ENCODE measurements at regions of chr2 and their contacts with region 1.

Region 1: GRCh38 chr2:203014456-203015199 is at the start of gene NBEAL1:
- DNase-seq: peak; percentile 99
- ATAC-seq: peak; percentile 93
- H3K4me3 ChIP-seq: peak within 1 kb of the TSS; percentile 61 to 99 (median 87)
- H3K4me3 Mint-ChIP-seq: peak within 1 kb of the TSS; percentile 93
- H3K27ac ChIP-seq: peak within 1 kb of the TSS; percentile 87 to 93
- H3K27ac Mint-ChIP-seq: peak within 1 kb of the TSS; percentile 89
- H3K4me1 ChIP-seq: peaks cover 15 to 17% of the 10 kb centered on the region in 2 donors
- H3K4me1 Mint-ChIP-seq: peaks cover 35% of the 10 kb centered on the region
- H3K27me3 ChIP-seq: no peaks in the 10 kb centered on the region
- H3K27me3 Mint-ChIP-seq: no peaks in the 10 kb centered on the region
- CTCF ChIP-seq: no peak
- total RNA-seq, gene NBEAL1: 22.0 and 22.5 TPM in 2 replicates

Region 2: GRCh38 chr2:201642579-201643215 is 1371.9 kb before region 1 on chr2:
- CTCF ChIA-PET with region 1: no interaction called
- POLR2A ChIA-PET with region 1: no interaction called
- intact Hi-C with region 1: loop called (anchors 5 kb)
- DNase-seq: peak; percentile 92
- ATAC-seq: peak; percentile 86
- H3K4me3 ChIP-seq: peak overlapping the region; percentile 73 to 100 (median 95)
- H3K4me3 Mint-ChIP-seq: peak overlapping the region; percentile 96
- H3K27ac ChIP-seq: peak overlapping the region; percentile 89 to 93
- H3K27ac Mint-ChIP-seq: peak overlapping the region; percentile 97
- H3K4me1 ChIP-seq: peaks cover 10 to 14% of the 10 kb centered on the region in 2 donors
- H3K4me1 Mint-ChIP-seq: peaks cover 12% of the 10 kb centered on the region
- H3K27me3 ChIP-seq: peaks cover 0 to 2% (median 0%) of the 10 kb centered on the region in 4 experiments
- H3K27me3 Mint-ChIP-seq: peaks cover 7% of the 10 kb centered on the region
- CTCF ChIP-seq: no peak

Region 3: DNA sequence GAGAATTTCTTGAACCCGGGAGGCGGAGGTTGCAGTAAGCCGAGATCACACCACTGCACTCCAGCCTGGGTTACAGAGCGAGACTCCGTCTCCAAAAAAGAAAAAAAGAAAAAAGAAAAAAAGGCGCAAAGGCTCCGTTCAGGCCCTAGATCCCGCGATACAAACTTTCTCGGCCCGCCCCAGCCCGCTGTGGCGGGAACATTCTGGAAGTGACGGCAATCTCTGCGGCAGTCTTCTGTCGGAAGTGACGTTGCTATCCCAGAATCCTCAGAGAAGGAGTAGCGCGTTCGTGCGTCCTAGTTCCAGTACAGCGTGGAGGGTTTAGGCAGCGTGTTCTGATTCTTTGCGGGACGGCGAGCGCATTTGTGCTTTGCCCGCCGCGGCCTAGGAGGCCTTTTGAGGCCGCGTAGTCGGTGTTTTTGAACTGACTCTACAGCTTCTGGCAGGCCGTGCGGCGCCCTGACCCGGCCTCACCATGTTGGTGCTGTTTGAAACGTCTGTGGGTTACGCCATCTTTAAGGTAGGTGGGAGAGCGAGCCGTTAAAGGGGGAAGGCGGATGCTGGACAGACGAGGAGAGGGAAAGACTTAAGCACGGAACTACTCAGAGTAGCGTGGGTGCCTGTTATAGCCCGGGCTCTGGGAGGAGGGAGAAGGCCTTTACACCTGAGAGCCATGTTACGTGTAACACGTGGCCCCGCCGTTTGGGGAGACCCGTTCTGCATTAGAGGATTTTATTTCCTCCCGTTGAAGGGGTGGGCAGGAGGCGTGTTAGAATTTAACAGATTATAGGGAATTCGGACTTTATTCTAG is 749.0 kb before region 1 on chr2 and contains the start of gene NOP58:
- CTCF ChIA-PET with region 1: no interaction called
- POLR2A ChIA-PET with region 1: no interaction called
- intact Hi-C with region 1: loop called (anchors 10 kb)
- DNase-seq: peak; percentile 95
- ATAC-seq: peak; percentile 86
- H3K4me3 ChIP-seq: peak within 1 kb of the TSS; percentile 70 to 100 (median 97)
- H3K4me3 Mint-ChIP-seq: peak within 1 kb of the TSS; percentile 57
- H3K27ac ChIP-seq: peak within 1 kb of the TSS; percentile 81 to 93
- H3K27ac Mint-ChIP-seq: peak within 1 kb of the TSS; percentile 71
- H3K4me1 ChIP-seq: peaks cover 25 to 42% of the 10 kb centered on the region in 2 donors
- H3K4me1 Mint-ChIP-seq: peaks cover 19% of the 10 kb centered on the region
- H3K27me3 ChIP-seq: no peaks in the 10 kb centered on the region
- H3K27me3 Mint-ChIP-seq: no peaks in the 10 kb centered on the region
- CTCF ChIP-seq: no peak
- total RNA-seq, gene NOP58: 136 and 138 TPM in 2 replicates

Region 4: GRCh38 chr2:202911512-202912341 is 102.9 kb before region 1 on chr2 and contains the starts of genes CARF and WDR12:
- CTCF ChIA-PET with region 1: no interaction called
- POLR2A ChIA-PET with region 1: no interaction called
- intact Hi-C with region 1: loop called (anchors 1 kb)
- DNase-seq: peak; percentile 96
- ATAC-seq: peak; percentile 81
- H3K4me3 ChIP-seq: peak within 1 kb of the TSS; percentile 52 to 100 (median 97)
- H3K4me3 Mint-ChIP-seq: peak within 1 kb of the TSS; percentile 99
- H3K27ac ChIP-seq: peak within 1 kb of the TSS; percentile 67 to 83
- H3K27ac Mint-ChIP-seq: peak within 1 kb of the TSS; percentile 99
- H3K4me1 ChIP-seq: peaks cover 5 to 11% of the 10 kb centered on the region in 2 donors
- H3K4me1 Mint-ChIP-seq: peaks cover 24% of the 10 kb centered on the region
- H3K27me3 ChIP-seq: no peaks in the 10 kb centered on the region
- H3K27me3 Mint-ChIP-seq: no peaks in the 10 kb centered on the region
- CTCF ChIP-seq: no peak
- total RNA-seq, gene CARF: 27.5 and 28.4 TPM in 2 replicates
- total RNA-seq, gene WDR12: 17.4 and 20.8 TPM in 2 replicates

Region 5: DNA sequence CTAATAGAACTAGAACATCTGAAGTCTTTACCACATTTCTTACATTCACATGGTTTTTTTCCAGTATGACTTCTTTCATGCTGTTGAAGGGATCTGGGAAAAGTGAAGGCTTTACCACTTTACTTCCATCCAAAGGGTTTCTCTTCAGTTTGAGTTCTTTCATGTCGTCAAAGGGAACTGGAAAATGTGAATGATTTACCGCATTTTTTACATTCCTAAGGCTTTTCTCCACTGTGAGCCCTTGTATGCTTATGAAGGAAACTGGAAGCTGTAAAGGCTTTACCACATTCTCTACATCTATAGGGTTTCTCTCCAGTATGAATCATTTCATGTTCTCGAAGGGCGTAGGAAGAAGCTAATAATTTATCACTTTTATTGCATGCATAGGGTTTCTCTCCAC is 46.7 kb after region 1 on chr2:
- CTCF ChIA-PET with region 1: no interaction called
- POLR2A ChIA-PET with region 1: no interaction called
- intact Hi-C with region 1: no loop called
- DNase-seq: no peak
- ATAC-seq: no peak
- H3K4me3 ChIP-seq: no peak overlapping the region
- H3K4me3 Mint-ChIP-seq: no peak overlapping the region
- H3K27ac ChIP-seq: no peak overlapping the region
- H3K27ac Mint-ChIP-seq: no peak overlapping the region
- H3K4me1 ChIP-seq: no peaks in the 10 kb centered on the region
- H3K4me1 Mint-ChIP-seq: no peaks in the 10 kb centered on the region
- H3K27me3 ChIP-seq: no peaks in the 10 kb centered on the region
- H3K27me3 Mint-ChIP-seq: no peaks in the 10 kb centered on the region
- CTCF ChIP-seq: no peak

Region 6: DNA sequence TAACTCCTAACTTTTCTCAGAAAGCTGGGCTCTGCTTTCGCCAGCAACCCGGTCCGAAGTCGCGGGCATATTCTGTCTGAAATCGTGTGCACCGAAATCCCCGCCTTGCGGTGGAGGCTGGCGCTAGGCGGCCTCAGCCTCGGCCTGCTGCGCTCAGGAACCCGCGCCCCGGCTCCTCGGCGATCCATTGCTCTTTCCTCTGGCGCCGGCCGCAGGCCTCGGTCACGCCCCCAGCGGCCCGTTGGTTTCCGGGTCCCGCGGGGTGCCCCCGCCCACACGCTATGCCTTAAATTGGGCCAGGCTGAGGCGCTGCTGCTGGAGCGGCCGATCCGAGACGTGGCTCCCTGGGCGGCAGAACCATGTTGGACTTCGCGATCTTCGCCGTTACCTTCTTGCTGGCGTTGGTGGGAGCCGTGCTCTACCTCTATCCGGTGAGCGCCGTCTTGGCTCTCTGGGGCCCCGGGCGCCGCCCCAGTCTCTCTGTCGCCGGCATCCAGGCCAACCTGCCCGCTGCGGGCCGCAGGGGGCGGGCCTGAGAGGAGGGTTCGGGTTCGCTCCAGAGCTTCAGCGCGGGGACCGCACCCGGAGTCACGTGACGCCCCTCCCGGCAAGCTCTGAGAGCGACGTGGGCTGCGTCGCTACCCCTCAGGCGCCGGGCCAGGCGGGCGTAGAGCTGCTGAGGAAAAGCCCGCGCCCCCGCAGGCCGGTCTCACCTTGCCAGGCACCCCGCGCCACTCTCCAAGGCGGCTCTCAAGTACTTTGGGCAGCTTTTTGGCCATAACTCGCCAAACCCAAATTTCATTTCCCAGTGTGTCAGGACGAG is 224.3 kb after region 1 on chr2 and contains the start of gene CYP20A1:
- CTCF ChIA-PET with region 1: no interaction called
- POLR2A ChIA-PET with region 1: no interaction called
- intact Hi-C with region 1: loop called (anchors 1 kb)
- DNase-seq: peak; percentile 98
- ATAC-seq: peak; percentile 86
- H3K4me3 ChIP-seq: peak within 1 kb of the TSS; percentile 63 to 98 (median 95)
- H3K4me3 Mint-ChIP-seq: peak within 1 kb of the TSS; percentile 96
- H3K27ac ChIP-seq: peak within 1 kb of the TSS; percentile 88 to 94
- H3K27ac Mint-ChIP-seq: peak within 1 kb of the TSS; percentile 98
- H3K4me1 ChIP-seq: peaks cover 17 to 19% of the 10 kb centered on the region in 2 donors
- H3K4me1 Mint-ChIP-seq: peaks cover 31% of the 10 kb centered on the region
- H3K27me3 ChIP-seq: no peaks in the 10 kb centered on the region
- H3K27me3 Mint-ChIP-seq: no peaks in the 10 kb centered on the region
- CTCF ChIP-seq: no peak
- total RNA-seq, gene CYP20A1: 38.5 and 40.8 TPM in 2 replicates

Region 7: DNA sequence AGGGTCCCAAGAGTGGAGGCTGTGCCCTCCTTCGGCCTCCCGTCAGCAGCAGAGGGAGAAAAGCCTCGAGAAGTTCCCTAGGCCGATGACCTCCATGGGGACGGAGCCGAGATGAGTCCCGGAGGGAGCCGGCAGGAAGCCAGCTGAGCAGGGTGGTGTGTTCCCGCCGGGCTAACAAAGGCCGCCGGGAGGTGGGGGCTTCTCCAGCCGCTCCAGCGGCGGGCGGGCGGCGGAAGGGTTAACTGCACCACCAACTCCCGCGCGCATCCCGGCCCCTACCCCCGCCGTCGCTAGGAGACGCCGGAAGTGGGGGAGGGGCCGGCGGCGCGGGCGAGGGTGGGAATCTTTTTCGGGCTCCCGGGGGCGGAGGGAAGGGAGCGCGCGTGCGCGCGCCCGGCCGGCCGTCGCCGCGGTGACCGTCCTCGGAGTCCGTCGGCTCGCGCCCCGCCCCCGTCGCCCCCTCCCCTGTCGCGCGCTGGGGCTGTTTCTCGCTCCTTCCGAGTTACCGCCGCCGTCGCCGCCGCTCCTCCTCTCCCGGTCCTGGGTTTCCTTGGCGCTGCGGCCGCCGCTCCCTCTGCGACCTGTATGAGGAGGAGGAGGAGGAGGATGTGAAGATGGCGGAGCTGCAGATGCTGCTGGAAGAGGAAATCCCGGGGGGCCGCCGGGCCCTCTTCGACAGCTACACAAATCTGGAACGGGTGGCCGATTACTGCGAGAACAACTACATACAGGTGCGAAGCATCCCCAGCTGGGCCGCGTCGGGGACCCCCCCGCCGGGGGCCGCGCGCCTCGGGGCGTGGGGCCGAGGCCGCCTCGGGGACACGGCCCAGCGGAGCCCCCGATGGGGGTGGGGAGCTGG is 313.5 kb after region 1 on chr2 and contains the start of gene ABI2:
- CTCF ChIA-PET with region 1: no interaction called
- POLR2A ChIA-PET with region 1: no interaction called
- intact Hi-C with region 1: loop called (anchors 10 kb)
- DNase-seq: peak; percentile 63
- ATAC-seq: peak; percentile 69
- H3K4me3 ChIP-seq: peak within 1 kb of the TSS; percentile 70 to 84 (median 78)
- H3K4me3 Mint-ChIP-seq: peak within 1 kb of the TSS; percentile 91
- H3K27ac ChIP-seq: peak within 1 kb of the TSS in 1 of 2 donors; percentile 63
- H3K27ac Mint-ChIP-seq: peak within 1 kb of the TSS; percentile 90
- H3K4me1 ChIP-seq: peaks cover 8 to 14% of the 10 kb centered on the region in 2 donors
- H3K4me1 Mint-ChIP-seq: peaks cover 23% of the 10 kb centered on the region
- H3K27me3 ChIP-seq: no peaks in the 10 kb centered on the region
- H3K27me3 Mint-ChIP-seq: no peaks in the 10 kb centered on the region
- CTCF ChIP-seq: no peak
- total RNA-seq, gene ABI2: 32.7 and 35.7 TPM in 2 replicates